CD8-positive, alpha-beta T cell (primary cell): ENCODE measurements at regions of chr12 and their contacts with region 1.

Region 1: GRCh38 chr12:121793838-121794533 is 498 bp upstream of the RHOF start:
- DNase-seq: peak; percentile 93 to 98 (median 95)
- ATAC-seq: peak; percentile 48
- H3K4me3 ChIP-seq: peak overlapping the region; percentile 93
- H3K4me3 Mint-ChIP-seq: peak overlapping the region; percentile 89
- H3K27ac ChIP-seq: peak overlapping the region; percentile 70 to 99
- H3K27ac Mint-ChIP-seq: peak overlapping the region; percentile 98
- H3K4me1 ChIP-seq: peaks cover 60% of the 10 kb centered on the region
- H3K4me1 Mint-ChIP-seq: peaks cover 66% of the 10 kb centered on the region
- H3K27me3 ChIP-seq: no peaks in the 10 kb centered on the region
- H3K27me3 Mint-ChIP-seq: no peaks in the 10 kb centered on the region
- CTCF ChIP-seq: peak; percentile 97

Region 2: GRCh38 chr12:121536899-121537813 is 256.8 kb before region 1 on chr12:
- CTCF ChIA-PET with region 1: no interaction called
- POLR2A ChIA-PET with region 1: no interaction called
- intact Hi-C with region 1: loop called (anchors 5 to 10 kb)
- DNase-seq: peak in 8 of 9 experiments; percentile 22 to 83 (median 58)
- ATAC-seq: peak; percentile 5
- H3K4me3 ChIP-seq: peak overlapping the region; percentile 52 to 68
- H3K4me3 Mint-ChIP-seq: peak overlapping the region; percentile 80
- H3K27ac ChIP-seq: peak overlapping the region; percentile 80 to 83
- H3K27ac Mint-ChIP-seq: peak overlapping the region; percentile 96
- H3K4me1 ChIP-seq: peaks cover 34% of the 10 kb centered on the region
- H3K4me1 Mint-ChIP-seq: peaks cover 43% of the 10 kb centered on the region
- H3K27me3 ChIP-seq: no peaks in the 10 kb centered on the region
- H3K27me3 Mint-ChIP-seq: no peaks in the 10 kb centered on the region
- CTCF ChIP-seq: no peak

Region 3: GRCh38 chr12:121688966-121689365 is 105.0 kb before region 1 on chr12:
- CTCF ChIA-PET with region 1: interaction called, 31 read pairs
- POLR2A ChIA-PET with region 1: interaction called, 6 read pairs
- intact Hi-C with region 1: loop called in 1 of 2 experiments (anchors 2 kb)
- DNase-seq: no peak
- ATAC-seq: no peak
- H3K4me3 ChIP-seq: no peak overlapping the region
- H3K4me3 Mint-ChIP-seq: no peak overlapping the region
- H3K27ac ChIP-seq: no peak overlapping the region
- H3K27ac Mint-ChIP-seq: no peak overlapping the region
- H3K4me1 ChIP-seq: peaks cover 5% of the 10 kb centered on the region
- H3K4me1 Mint-ChIP-seq: peaks cover 8% of the 10 kb centered on the region
- H3K27me3 ChIP-seq: no peaks in the 10 kb centered on the region
- H3K27me3 Mint-ChIP-seq: no peaks in the 10 kb centered on the region
- CTCF ChIP-seq: no peak

Region 4: GRCh38 chr12:121712461-121713256 is 81.3 kb before region 1 on chr12 and contains the start of gene TMEM120B:
- CTCF ChIA-PET with region 1: interaction called, 33 read pairs
- POLR2A ChIA-PET with region 1: interaction called, 17 read pairs
- intact Hi-C with region 1: loop called in 1 of 2 experiments (anchors 1 kb)
- DNase-seq: peak; percentile 70 to 92 (median 85)
- ATAC-seq: peak; percentile 92
- H3K4me3 ChIP-seq: peak within 1 kb of the TSS; percentile 96 to 100
- H3K4me3 Mint-ChIP-seq: peak within 1 kb of the TSS; percentile 92
- H3K27ac ChIP-seq: peak within 1 kb of the TSS; percentile 73 to 89
- H3K27ac Mint-ChIP-seq: peak within 1 kb of the TSS; percentile 91
- H3K4me1 ChIP-seq: peaks cover 17% of the 10 kb centered on the region
- H3K4me1 Mint-ChIP-seq: peaks cover 31% of the 10 kb centered on the region
- H3K27me3 ChIP-seq: no peaks in the 10 kb centered on the region
- H3K27me3 Mint-ChIP-seq: no peaks in the 10 kb centered on the region
- CTCF ChIP-seq: no peak
- total RNA-seq, gene TMEM120B: 6.4 to 7.3 TPM

Region 5: DNA sequence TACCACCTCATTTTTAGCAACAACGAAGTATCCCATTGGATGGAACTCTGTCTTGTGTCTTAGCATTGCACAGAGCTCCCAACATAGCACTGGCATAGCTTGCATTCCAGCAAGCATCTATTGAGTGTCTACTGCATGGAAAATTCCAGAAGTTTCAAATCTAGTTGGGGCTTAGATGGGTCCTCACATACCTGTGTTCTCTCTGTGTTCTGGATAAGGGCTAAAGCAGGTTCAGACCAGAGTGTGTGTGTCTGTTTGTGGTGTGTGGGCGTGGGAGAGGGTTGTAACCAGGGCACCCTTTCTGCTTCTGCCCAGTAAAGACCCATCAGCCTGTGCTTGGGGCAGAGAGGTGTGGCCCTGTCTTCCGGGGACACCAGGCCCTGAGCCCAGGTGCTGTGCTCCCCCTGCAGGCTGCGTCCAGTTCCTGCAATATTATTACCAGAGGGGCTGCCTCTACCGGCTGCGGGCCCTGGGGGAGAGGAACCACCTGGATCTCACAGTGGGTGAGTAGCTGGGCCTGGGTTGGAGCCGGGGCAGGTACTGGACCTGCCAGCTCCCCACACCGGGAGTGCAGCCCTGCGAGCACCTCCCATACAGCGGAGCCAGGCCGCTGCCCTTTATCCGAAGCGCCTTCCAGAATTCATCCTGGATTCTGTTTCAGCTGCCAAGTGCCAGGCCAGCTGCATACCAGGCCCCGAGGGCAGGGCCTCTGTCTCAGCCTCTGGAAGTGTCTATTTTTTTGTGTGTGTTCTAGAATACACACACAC is 20.8 kb before region 1 on chr12:
- CTCF ChIA-PET with region 1: interaction called, 2,042 read pairs
- POLR2A ChIA-PET with region 1: interaction called, 1,016 read pairs
- intact Hi-C with region 1: loop called (anchors 1 kb)
- DNase-seq: peak; percentile 63 to 88 (median 80)
- ATAC-seq: peak; percentile 90
- H3K4me3 ChIP-seq: no peak overlapping the region
- H3K4me3 Mint-ChIP-seq: no peak overlapping the region
- H3K27ac ChIP-seq: peak overlapping the region in 1 of 2 experiments; percentile 32
- H3K27ac Mint-ChIP-seq: peak overlapping the region; percentile 57
- H3K4me1 ChIP-seq: peaks cover 29% of the 10 kb centered on the region
- H3K4me1 Mint-ChIP-seq: peaks cover 16% of the 10 kb centered on the region
- H3K27me3 ChIP-seq: no peaks in the 10 kb centered on the region
- H3K27me3 Mint-ChIP-seq: no peaks in the 10 kb centered on the region
- CTCF ChIP-seq: peak; percentile 82

Region 6: GRCh38 chr12:121839106-121839992 is 45.4 kb after region 1 on chr12:
- CTCF ChIA-PET with region 1: interaction called, 50 read pairs
- POLR2A ChIA-PET with region 1: interaction called, 5 read pairs
- intact Hi-C with region 1: loop called in 1 of 2 experiments (anchors 2 kb)
- DNase-seq: peak; percentile 99 to 100 (median 100)
- ATAC-seq: peak; percentile 97
- H3K4me3 ChIP-seq: peak overlapping the region; percentile 73 to 95
- H3K4me3 Mint-ChIP-seq: peak overlapping the region; percentile 97
- H3K27ac ChIP-seq: peak overlapping the region; percentile 34 to 54
- H3K27ac Mint-ChIP-seq: peak overlapping the region; percentile 88
- H3K4me1 ChIP-seq: peaks cover 7% of the 10 kb centered on the region
- H3K4me1 Mint-ChIP-seq: peaks cover 13% of the 10 kb centered on the region
- H3K27me3 ChIP-seq: no peaks in the 10 kb centered on the region
- H3K27me3 Mint-ChIP-seq: no peaks in the 10 kb centered on the region
- CTCF ChIP-seq: peak; percentile 27

Region 7: GRCh38 chr12:122225683-122226407 is 431.9 kb after region 1 on chr12 and contains the start of gene DIABLO:
- CTCF ChIA-PET with region 1: no interaction called
- POLR2A ChIA-PET with region 1: no interaction called
- intact Hi-C with region 1: loop called in 1 of 2 experiments (anchors 10 kb)
- DNase-seq: peak; percentile 99 to 100 (median 100)
- ATAC-seq: peak; percentile 91
- H3K4me3 ChIP-seq: peak within 1 kb of the TSS; percentile 79 to 91
- H3K4me3 Mint-ChIP-seq: peak within 1 kb of the TSS; percentile 86
- H3K27ac ChIP-seq: peak within 1 kb of the TSS; percentile 97 to 98
- H3K27ac Mint-ChIP-seq: peak within 1 kb of the TSS; percentile 92
- H3K4me1 ChIP-seq: peaks cover 41% of the 10 kb centered on the region
- H3K4me1 Mint-ChIP-seq: peaks cover 52% of the 10 kb centered on the region
- H3K27me3 ChIP-seq: no peaks in the 10 kb centered on the region
- H3K27me3 Mint-ChIP-seq: no peaks in the 10 kb centered on the region
- CTCF ChIP-seq: no peak
- total RNA-seq, gene DIABLO: 104 to 112 TPM